CD8-positive, alpha-beta T cell (primary cell): ENCODE measurements at regions of chr6 and their contacts with region 1.

Region 1: GRCh38 chr6:88870717-88871330 is 92.6 kb downstream of the RNGTT start:
- DNase-seq: peak in 8 of 9 experiments; percentile 7 to 72 (median 38)
- ATAC-seq: no peak
- H3K4me3 ChIP-seq: no peak overlapping the region
- H3K4me3 Mint-ChIP-seq: no peak overlapping the region
- H3K27ac ChIP-seq: no peak overlapping the region
- H3K27ac Mint-ChIP-seq: no peak overlapping the region
- H3K4me1 ChIP-seq: peaks cover 5% of the 10 kb centered on the region
- H3K4me1 Mint-ChIP-seq: peaks cover 9% of the 10 kb centered on the region
- H3K27me3 ChIP-seq: no peaks in the 10 kb centered on the region
- H3K27me3 Mint-ChIP-seq: no peaks in the 10 kb centered on the region
- CTCF ChIP-seq: peak; percentile 86

Region 2: DNA sequence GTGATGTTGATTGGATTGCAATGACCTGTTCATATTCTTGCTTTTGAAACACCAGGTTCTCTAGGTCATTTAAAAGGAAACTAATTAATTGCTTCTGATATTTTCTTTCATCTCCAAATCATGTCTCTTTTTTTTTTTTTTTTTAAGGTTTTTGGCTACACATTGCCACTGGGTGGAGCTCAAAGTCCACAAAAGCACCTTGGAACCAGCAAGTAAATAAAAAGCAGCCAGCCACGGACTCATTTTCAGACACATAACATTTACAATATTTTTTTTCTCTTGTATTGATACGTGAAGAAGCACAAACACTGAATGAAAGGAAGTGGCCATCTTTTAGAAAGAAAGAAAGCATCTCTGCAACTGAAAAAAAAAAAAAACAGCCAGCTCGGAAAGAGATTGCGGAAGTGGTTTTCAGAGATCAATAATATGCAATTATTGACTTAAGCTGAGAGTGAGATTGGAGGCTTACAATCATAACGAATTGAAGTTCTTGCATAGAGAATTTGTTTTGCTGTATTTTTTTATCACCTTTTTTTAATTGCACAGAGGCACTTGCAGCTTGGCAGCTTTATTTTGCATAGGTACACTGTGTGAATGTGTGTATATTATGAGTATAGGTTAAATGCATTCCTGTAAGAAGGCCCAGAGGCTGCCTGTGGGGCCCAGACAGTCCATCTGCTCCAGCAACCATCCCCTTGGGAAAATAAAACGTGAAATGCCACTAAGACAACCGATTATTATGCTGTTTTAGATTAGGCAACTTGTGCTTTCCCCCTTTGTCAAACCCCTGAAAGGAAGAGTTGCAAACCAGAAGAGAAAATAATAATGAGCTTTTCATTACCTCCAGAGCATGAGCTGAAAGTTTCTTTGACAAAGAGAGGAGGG is 1804.1 kb before region 1 on chr6:
- CTCF ChIA-PET with region 1: no interaction called
- POLR2A ChIA-PET with region 1: no interaction called
- intact Hi-C with region 1: loop called (anchors 2 to 5 kb)
- DNase-seq: peak in 3 of 9 experiments; percentile 20 to 62 (median 54)
- ATAC-seq: no peak
- H3K4me3 ChIP-seq: no peak overlapping the region
- H3K4me3 Mint-ChIP-seq: no peak overlapping the region
- H3K27ac ChIP-seq: no peak overlapping the region
- H3K27ac Mint-ChIP-seq: no peak overlapping the region
- H3K4me1 ChIP-seq: no peaks in the 10 kb centered on the region
- H3K4me1 Mint-ChIP-seq: no peaks in the 10 kb centered on the region
- H3K27me3 ChIP-seq: no peaks in the 10 kb centered on the region
- H3K27me3 Mint-ChIP-seq: peaks cover 5% of the 10 kb centered on the region
- CTCF ChIP-seq: peak; percentile 46

Region 3: DNA sequence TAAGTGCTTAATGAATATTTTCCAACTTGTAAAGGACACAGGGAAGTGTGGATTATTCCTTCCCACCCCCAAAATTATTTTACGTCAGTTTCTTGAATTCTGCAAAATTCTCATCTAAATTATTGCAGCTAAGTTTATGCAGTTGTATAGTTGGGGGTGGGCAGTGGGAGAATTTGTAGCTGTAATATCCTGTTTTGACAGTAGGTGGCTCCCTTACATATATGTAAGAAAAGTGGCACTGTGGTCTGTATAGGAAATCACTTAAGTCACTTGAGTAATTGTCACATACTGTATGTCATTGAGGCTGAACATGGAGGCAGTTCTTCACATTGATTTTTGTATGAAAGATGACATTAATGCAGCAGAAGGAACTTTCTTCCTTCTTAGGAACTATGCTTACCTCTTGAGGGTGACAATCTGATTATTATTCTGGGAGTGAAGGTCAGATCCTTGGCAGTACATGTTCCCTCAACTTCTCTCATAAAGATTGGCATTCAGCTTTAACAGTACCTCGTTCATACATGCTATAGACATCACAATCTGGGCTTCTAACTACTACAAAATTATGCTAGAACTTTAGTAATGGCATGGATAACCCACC is 1477.7 kb before region 1 on chr6:
- CTCF ChIA-PET with region 1: interaction called, 16 read pairs
- POLR2A ChIA-PET with region 1: no interaction called
- intact Hi-C with region 1: loop called (anchors 1 to 2 kb)
- DNase-seq: peak in 7 of 9 experiments; percentile 8 to 79 (median 29)
- ATAC-seq: peak; percentile 99
- H3K4me3 ChIP-seq: no peak overlapping the region
- H3K4me3 Mint-ChIP-seq: no peak overlapping the region
- H3K27ac ChIP-seq: no peak overlapping the region
- H3K27ac Mint-ChIP-seq: no peak overlapping the region
- H3K4me1 ChIP-seq: no peaks in the 10 kb centered on the region
- H3K4me1 Mint-ChIP-seq: peaks cover 3% of the 10 kb centered on the region
- H3K27me3 ChIP-seq: no peaks in the 10 kb centered on the region
- H3K27me3 Mint-ChIP-seq: no peaks in the 10 kb centered on the region
- CTCF ChIP-seq: peak; percentile 72

Region 4: GRCh38 chr6:87832025-87832825 is 1038.6 kb before region 1 on chr6:
- CTCF ChIA-PET with region 1: interaction called, 7 read pairs
- POLR2A ChIA-PET with region 1: no interaction called
- intact Hi-C with region 1: loop called (anchors 1 to 5 kb)
- DNase-seq: peak in 2 of 9 experiments; percentile 30 to 53
- ATAC-seq: peak; percentile 55
- H3K4me3 ChIP-seq: peak overlapping the region; percentile 34 to 52
- H3K4me3 Mint-ChIP-seq: peak overlapping the region; percentile 91
- H3K27ac ChIP-seq: peak overlapping the region; percentile 31 to 53
- H3K27ac Mint-ChIP-seq: peak overlapping the region; percentile 88
- H3K4me1 ChIP-seq: peaks cover 4% of the 10 kb centered on the region
- H3K4me1 Mint-ChIP-seq: peaks cover 8% of the 10 kb centered on the region
- H3K27me3 ChIP-seq: no peaks in the 10 kb centered on the region
- H3K27me3 Mint-ChIP-seq: peaks cover 2% of the 10 kb centered on the region
- CTCF ChIP-seq: no peak

Region 5: GRCh38 chr6:87929843-87930288 is 941.0 kb before region 1 on chr6:
- CTCF ChIA-PET with region 1: interaction called, 29 read pairs
- POLR2A ChIA-PET with region 1: no interaction called
- intact Hi-C with region 1: loop called (anchors 1 kb)
- DNase-seq: peak; percentile 13 to 66 (median 44)
- ATAC-seq: peak; percentile 66
- H3K4me3 ChIP-seq: no peak overlapping the region
- H3K4me3 Mint-ChIP-seq: no peak overlapping the region
- H3K27ac ChIP-seq: no peak overlapping the region
- H3K27ac Mint-ChIP-seq: no peak overlapping the region
- H3K4me1 ChIP-seq: no peaks in the 10 kb centered on the region
- H3K4me1 Mint-ChIP-seq: peaks cover 6% of the 10 kb centered on the region
- H3K27me3 ChIP-seq: no peaks in the 10 kb centered on the region
- H3K27me3 Mint-ChIP-seq: no peaks in the 10 kb centered on the region
- CTCF ChIP-seq: peak; percentile 52

Region 6: GRCh38 chr6:88823998-88824397 is 46.8 kb before region 1 on chr6:
- CTCF ChIA-PET with region 1: no interaction called
- POLR2A ChIA-PET with region 1: no interaction called
- intact Hi-C with region 1: no loop called
- DNase-seq: no peak
- ATAC-seq: no peak
- H3K4me3 ChIP-seq: no peak overlapping the region
- H3K4me3 Mint-ChIP-seq: no peak overlapping the region
- H3K27ac ChIP-seq: no peak overlapping the region
- H3K27ac Mint-ChIP-seq: no peak overlapping the region
- H3K4me1 ChIP-seq: no peaks in the 10 kb centered on the region
- H3K4me1 Mint-ChIP-seq: peaks cover 19% of the 10 kb centered on the region
- H3K27me3 ChIP-seq: no peaks in the 10 kb centered on the region
- H3K27me3 Mint-ChIP-seq: no peaks in the 10 kb centered on the region
- CTCF ChIP-seq: no peak

Region 7: DNA sequence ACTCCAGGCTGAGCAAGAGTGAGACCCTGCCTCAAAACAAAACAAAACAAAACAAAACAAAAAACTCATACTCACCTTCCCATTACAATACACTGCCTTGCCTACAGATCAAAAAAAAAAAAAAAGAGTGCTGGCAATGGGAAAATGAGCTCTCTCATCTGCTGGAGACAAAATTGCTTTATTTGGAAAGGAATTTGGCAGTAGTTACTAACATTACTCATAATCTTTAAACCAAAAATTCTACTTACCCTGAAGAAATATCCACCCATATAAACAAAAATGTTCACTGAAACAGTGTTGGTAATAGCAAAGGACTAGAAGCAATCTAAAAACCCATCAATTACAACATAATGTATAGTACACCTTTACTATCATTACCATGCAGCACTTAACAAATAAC is 27.8 kb before region 1 on chr6:
- CTCF ChIA-PET with region 1: no interaction called
- POLR2A ChIA-PET with region 1: no interaction called
- intact Hi-C with region 1: no loop called
- DNase-seq: no peak
- ATAC-seq: no peak
- H3K4me3 ChIP-seq: no peak overlapping the region
- H3K4me3 Mint-ChIP-seq: no peak overlapping the region
- H3K27ac ChIP-seq: no peak overlapping the region
- H3K27ac Mint-ChIP-seq: no peak overlapping the region
- H3K4me1 ChIP-seq: no peaks in the 10 kb centered on the region
- H3K4me1 Mint-ChIP-seq: no peaks in the 10 kb centered on the region
- H3K27me3 ChIP-seq: no peaks in the 10 kb centered on the region
- H3K27me3 Mint-ChIP-seq: no peaks in the 10 kb centered on the region
- CTCF ChIP-seq: no peak

Region 8: DNA sequence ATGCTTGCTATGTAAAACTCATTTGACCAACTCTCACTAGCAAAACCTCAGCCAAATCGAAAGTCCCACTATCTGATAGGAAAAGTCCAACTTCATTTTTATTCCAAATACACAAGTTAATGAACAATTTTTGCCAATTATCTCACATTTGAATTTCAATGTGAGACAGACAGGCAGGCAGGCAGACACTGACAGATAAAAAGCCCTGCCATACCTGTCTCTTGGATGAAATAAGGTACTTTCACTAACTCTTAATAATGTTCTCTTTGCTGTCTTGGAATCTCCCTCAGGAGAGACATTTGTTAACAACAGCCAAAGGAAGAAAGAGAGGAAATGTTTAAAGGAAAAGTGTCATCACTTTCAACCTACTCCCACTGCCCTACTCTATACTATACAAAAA is 10.6 kb after region 1 on chr6:
- CTCF ChIA-PET with region 1: interaction called, 10 read pairs
- POLR2A ChIA-PET with region 1: interaction called, 3 read pairs
- intact Hi-C with region 1: no loop called
- DNase-seq: no peak
- ATAC-seq: no peak
- H3K4me3 ChIP-seq: no peak overlapping the region
- H3K4me3 Mint-ChIP-seq: no peak overlapping the region
- H3K27ac ChIP-seq: no peak overlapping the region
- H3K27ac Mint-ChIP-seq: no peak overlapping the region
- H3K4me1 ChIP-seq: no peaks in the 10 kb centered on the region
- H3K4me1 Mint-ChIP-seq: peaks cover 4% of the 10 kb centered on the region
- H3K27me3 ChIP-seq: no peaks in the 10 kb centered on the region
- H3K27me3 Mint-ChIP-seq: no peaks in the 10 kb centered on the region
- CTCF ChIP-seq: no peak

Region 9: DNA sequence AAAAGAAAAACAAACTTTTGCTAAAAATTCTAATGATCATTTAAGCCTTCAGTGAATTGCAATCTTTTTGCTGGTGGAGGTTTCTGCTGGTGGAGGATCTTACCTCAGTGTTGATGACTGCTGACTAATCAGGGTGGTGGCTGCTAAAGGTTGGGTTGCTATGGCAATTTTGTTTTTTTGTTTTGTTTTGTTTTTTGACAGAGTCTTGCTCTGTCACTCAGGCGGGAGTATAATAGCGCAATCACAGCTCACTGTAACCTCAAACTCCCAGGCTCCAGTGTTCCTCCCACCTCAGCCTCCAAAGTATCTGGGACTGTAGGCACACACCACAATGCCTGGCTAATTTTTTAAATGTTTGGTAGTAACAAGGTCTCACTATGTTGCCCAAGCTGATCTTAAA is 656.8 kb after region 1 on chr6:
- CTCF ChIA-PET with region 1: no interaction called
- POLR2A ChIA-PET with region 1: no interaction called
- intact Hi-C with region 1: no loop called
- DNase-seq: peak in 2 of 9 experiments; percentile 14 to 20
- ATAC-seq: no peak
- H3K4me3 ChIP-seq: no peak overlapping the region
- H3K4me3 Mint-ChIP-seq: no peak overlapping the region
- H3K27ac ChIP-seq: no peak overlapping the region
- H3K27ac Mint-ChIP-seq: no peak overlapping the region
- H3K4me1 ChIP-seq: no peaks in the 10 kb centered on the region
- H3K4me1 Mint-ChIP-seq: peaks cover 2% of the 10 kb centered on the region
- H3K27me3 ChIP-seq: no peaks in the 10 kb centered on the region
- H3K27me3 Mint-ChIP-seq: no peaks in the 10 kb centered on the region
- CTCF ChIP-seq: no peak